ENCODE measurements at regions of chr13 and their contacts with region 1.

Region 1: GRCh38 chr13:19633479-19634255 is at the start of gene MPHOSPH8:
- DNase-seq: peak; percentile 82
- ATAC-seq: peak; percentile 97
- H3K4me3 Mint-ChIP-seq: peak within 1 kb of the TSS; percentile 100
- H3K27ac Mint-ChIP-seq: peak within 1 kb of the TSS; percentile 98
- H3K4me1 Mint-ChIP-seq: peaks cover 38% of the 10 kb centered on the region
- H3K27me3 Mint-ChIP-seq: no peaks in the 10 kb centered on the region
- CTCF ChIP-seq: no peak
- total RNA-seq, gene MPHOSPH8: 32.5 and 43.6 TPM in 2 replicates

Region 2: GRCh38 chr13:19567820-19568534 is 65.7 kb before region 1 on chr13:
- CTCF ChIA-PET with region 1: no interaction called
- POLR2A ChIA-PET with region 1: interaction called, 6 read pairs
- intact Hi-C with region 1: loop called (anchors 1 kb)
- DNase-seq: no peak
- ATAC-seq: no peak
- H3K4me3 Mint-ChIP-seq: peak overlapping the region; percentile 4
- H3K27ac Mint-ChIP-seq: no peak overlapping the region
- H3K4me1 Mint-ChIP-seq: peaks cover 16% of the 10 kb centered on the region
- H3K27me3 Mint-ChIP-seq: peaks cover 2% of the 10 kb centered on the region
- CTCF ChIP-seq: no peak

Region 3: DNA sequence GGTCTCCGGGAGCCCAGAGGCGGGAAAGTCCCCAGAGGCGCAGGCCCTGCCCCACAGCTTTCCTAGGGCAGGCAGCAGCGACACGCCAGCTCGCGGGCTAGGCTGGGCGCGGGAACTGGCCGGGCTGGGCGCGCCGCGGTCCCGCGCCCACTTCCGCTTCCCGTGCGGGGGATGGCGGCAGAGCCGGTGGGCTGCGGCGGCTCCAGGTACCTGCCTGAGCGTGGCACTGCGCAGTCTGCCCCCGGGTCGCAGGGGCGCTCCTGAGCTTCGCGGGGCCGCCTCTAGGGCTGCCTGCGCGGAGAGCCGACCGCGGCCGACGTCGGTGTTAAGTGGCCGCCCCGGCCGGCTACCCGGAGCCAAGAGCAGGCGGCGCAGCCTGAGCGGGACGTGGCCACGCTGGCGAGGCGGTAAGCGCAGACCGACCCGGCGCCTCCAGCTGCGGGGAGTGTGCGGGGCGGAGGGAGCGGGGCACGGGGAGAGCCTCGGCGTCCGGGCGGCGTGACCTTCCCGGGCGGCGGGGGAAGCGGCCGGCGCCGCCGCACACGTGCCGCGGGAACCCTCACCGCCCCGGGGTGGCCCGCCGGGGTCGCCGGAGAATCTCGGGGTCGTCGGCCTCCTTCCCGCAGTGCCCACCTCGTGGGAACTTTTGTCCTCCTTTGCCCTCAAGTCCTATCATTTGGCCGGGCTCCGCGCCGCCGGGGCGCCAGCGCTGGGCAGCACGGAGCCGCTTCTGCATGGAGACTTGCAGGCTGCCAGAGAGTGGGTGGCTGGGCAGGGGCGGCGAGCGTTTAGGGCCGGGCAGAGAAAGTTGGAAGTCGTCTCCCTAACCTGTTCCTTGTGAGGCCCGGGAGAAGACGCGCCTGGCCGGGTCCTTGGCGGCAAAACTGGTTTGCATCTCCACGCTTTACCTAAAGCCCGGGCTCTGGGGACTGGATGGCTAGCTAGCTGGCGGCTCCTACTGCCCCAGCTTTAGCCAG is 31.6 kb before region 1 on chr13:
- CTCF ChIA-PET with region 1: no interaction called
- POLR2A ChIA-PET with region 1: no interaction called
- intact Hi-C with region 1: loop called (anchors 1 kb)
- DNase-seq: peak; percentile 28
- ATAC-seq: peak; percentile 88
- H3K4me3 Mint-ChIP-seq: peak overlapping the region; percentile 69
- H3K27ac Mint-ChIP-seq: no peak overlapping the region
- H3K4me1 Mint-ChIP-seq: peaks cover 5% of the 10 kb centered on the region
- H3K27me3 Mint-ChIP-seq: peaks cover 40% of the 10 kb centered on the region
- CTCF ChIP-seq: no peak

Region 4: DNA sequence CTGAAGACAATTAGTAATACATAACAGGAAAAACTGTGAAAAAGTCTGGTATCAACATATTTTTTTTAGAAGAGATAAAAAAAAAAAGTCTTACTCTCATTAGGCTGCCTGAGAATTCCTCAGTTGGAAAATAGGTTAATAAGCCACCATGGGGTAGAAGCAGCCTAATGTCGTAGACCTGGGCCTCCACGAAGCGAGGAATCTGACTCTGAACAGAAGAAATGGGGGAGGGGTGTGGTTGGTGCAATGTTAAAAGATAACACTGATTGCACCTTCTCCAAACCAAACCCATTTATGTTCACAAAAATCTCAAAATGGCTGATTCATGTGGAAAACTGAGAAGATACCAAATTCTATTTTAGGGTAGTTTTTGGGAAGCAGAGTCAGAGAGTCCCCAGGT is 62.2 kb after region 1 on chr13:
- CTCF ChIA-PET with region 1: no interaction called
- POLR2A ChIA-PET with region 1: no interaction called
- intact Hi-C with region 1: loop called (anchors 10 kb)
- DNase-seq: no peak
- ATAC-seq: no peak
- H3K4me3 Mint-ChIP-seq: no peak overlapping the region
- H3K27ac Mint-ChIP-seq: no peak overlapping the region
- H3K4me1 Mint-ChIP-seq: no peaks in the 10 kb centered on the region
- H3K27me3 Mint-ChIP-seq: no peaks in the 10 kb centered on the region
- CTCF ChIP-seq: no peak

Region 5: DNA sequence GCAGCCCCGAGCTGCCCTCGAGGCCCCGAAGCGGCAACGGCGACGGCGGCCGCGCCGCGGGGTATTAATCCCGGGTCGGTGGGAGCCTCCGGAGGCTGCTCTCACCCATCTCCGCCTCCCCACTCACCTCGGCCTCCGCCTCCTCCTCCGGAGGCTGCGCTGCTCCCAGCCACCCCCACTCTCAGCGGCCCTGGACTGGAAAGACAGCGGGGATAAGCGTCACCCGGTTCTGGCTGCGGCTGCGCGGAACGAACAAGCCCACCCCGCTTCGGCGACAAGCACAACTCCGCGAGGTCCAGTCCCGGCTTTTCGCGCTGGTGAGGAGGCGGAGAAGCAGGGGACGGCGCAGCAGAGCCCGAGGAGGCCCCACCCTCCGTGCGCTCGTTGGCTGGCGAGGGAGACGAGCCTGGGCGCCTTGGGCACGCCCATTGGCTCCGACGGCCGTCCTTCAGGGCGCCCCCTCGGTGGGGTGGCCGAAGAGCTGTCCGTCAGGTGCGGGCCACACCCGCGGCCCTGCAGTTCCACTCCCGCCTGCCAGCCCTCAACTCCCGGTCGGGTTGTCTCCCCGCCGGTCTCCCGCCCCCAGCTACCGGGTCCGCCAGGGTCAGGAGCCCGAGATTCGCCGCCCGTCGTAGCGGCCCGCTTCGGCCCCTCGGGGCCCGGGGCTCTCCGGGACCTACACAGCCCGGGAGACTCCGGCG is 229.8 kb after region 1 on chr13 and contains the start of gene ZMYM5:
- CTCF ChIA-PET with region 1: no interaction called
- POLR2A ChIA-PET with region 1: interaction called, 21 read pairs
- intact Hi-C with region 1: loop called (anchors 1 kb)
- DNase-seq: peak; percentile 93
- ATAC-seq: peak; percentile 88
- H3K4me3 Mint-ChIP-seq: peak within 1 kb of the TSS; percentile 89
- H3K27ac Mint-ChIP-seq: peak within 1 kb of the TSS; percentile 96
- H3K4me1 Mint-ChIP-seq: peaks cover 30% of the 10 kb centered on the region
- H3K27me3 Mint-ChIP-seq: no peaks in the 10 kb centered on the region
- CTCF ChIP-seq: no peak
- total RNA-seq, gene ZMYM5: 14.1 and 17.1 TPM in 2 replicates

Region 6: GRCh38 chr13:20773194-20774080 is 1139.8 kb after region 1 on chr13 and contains the start of gene EEF1AKMT1:
- CTCF ChIA-PET with region 1: no interaction called
- POLR2A ChIA-PET with region 1: no interaction called
- intact Hi-C with region 1: loop called (anchors 5 kb)
- DNase-seq: peak; percentile 94
- ATAC-seq: peak; percentile 95
- H3K4me3 Mint-ChIP-seq: peak within 1 kb of the TSS; percentile 98
- H3K27ac Mint-ChIP-seq: peak within 1 kb of the TSS; percentile 99
- H3K4me1 Mint-ChIP-seq: peaks cover 21% of the 10 kb centered on the region
- H3K27me3 Mint-ChIP-seq: no peaks in the 10 kb centered on the region
- CTCF ChIP-seq: no peak
- total RNA-seq, gene EEF1AKMT1: 3.9 and 7.4 TPM in 2 replicates